Panc1 (cell line): ENCODE measurements at regions of chr1 and their contacts with region 1.

Region 1: DNA sequence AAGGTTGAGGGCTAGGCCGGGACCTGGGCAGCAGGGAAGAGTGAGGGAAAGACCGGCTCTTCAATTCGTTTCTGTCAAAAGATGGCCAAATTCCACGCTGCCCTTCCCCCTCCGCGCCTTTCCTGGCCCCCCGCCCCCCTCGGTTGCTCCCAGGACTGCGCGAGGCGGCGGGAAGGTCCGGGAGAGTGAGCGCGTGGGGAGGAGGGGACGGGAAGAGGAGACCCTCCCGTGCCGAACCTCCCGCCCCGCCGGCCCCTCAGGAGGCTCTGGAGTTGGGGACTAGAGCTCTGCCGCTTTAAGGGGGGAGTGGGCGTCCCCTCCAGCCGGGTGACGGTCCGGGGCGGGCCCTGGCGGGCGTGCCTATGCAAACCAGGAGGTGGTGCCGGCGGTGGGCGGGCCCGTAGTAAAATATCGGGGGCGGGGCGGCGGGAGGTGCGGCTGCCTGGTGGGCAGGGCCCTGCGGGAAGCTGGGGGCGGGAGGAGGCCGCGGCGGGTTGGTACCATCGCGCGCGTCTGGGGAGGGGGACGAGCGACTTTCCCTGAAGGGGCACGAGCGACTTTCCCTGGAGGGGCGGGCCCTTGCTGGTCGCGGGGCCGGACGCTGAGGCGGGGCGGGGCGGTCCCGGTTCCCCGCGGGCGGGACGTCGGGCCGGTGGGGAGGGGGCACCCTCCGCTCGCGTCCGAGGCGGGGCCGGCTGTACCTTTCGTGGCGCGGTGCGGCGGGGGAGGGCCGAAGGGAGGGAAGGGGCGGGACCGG is 58.2 kb downstream of the BCL9 start:
- DNase-seq: peak; percentile 32
- ATAC-seq: peak; percentile 94
- H3K4me3 ChIP-seq: peak overlapping the region; percentile 72 to 81
- H3K27ac ChIP-seq: peak overlapping the region; percentile 72
- H3K4me1 ChIP-seq: peaks cover 9% of the 10 kb centered on the region
- H3K27me3 ChIP-seq: peaks cover 14% of the 10 kb centered on the region
- CTCF ChIP-seq: no peak

Region 2: DNA sequence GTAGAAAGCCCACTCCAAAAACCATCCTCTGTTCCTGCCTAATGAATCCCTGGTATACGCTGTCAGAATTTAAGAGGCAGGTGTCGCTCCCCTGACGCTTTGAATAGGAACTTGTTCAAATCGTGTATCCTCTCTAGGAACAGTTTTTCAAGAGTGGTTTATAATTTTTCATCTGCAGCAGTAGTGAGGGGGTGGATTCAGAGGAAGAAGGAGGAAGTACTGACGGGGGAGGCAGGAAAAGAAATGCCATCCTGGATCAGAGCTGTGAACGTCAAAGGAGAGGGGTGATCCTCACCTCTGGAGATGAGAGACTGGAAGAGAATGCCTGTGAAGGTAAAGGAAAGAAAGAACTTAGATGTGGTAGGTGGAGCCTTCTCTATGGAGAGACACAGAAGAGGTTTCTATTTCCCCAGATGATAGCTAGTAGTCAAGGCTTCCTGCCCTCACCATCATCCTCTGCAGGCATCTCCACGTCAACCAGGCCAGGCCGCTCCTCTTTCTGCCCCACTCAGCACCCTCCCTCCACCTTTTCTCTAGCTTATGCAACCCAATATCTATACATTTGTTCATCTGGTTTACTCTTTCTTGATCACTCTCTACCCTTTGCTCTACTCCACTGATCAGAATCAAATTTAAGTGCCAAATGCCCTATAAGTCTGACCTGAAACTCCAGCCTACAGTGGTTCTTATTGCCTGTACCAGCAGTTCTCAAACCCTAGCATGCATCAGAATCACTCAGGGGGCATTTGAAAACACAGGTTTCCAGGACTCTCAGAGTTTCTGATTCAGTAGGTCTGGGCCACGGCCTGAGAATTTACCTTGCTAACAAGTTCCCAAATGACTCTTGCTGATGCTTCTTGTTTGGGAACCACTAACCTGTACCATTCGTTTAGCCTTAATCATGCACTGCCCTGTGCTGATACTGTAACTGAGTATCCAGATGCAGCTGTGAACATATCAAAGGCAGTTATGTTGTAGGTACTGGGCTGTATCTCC is 71.3 kb before region 1 on chr1:
- CTCF ChIA-PET with region 1: no interaction called
- POLR2A ChIA-PET with region 1: no interaction called
- in situ Hi-C with region 1: no loop called
- intact Hi-C with region 1: loop called (anchors 10 kb)
- DNase-seq: no peak
- ATAC-seq: no peak
- H3K4me3 ChIP-seq: no peak overlapping the region
- H3K27ac ChIP-seq: no peak overlapping the region
- H3K4me1 ChIP-seq: no peaks in the 10 kb centered on the region
- H3K27me3 ChIP-seq: peaks cover 15% of the 10 kb centered on the region
- CTCF ChIP-seq: no peak